Activated naive CD4-positive, alpha-beta T cell treated with anti-CD3 and anti-CD28 coated beads, Interleukin-2, amount 10 ng/mL, durations not matched to agents 7 days and 5 days (primary cell): ENCODE measurements at regions of chr2 and their contacts with region 1.

Region 1: DNA sequence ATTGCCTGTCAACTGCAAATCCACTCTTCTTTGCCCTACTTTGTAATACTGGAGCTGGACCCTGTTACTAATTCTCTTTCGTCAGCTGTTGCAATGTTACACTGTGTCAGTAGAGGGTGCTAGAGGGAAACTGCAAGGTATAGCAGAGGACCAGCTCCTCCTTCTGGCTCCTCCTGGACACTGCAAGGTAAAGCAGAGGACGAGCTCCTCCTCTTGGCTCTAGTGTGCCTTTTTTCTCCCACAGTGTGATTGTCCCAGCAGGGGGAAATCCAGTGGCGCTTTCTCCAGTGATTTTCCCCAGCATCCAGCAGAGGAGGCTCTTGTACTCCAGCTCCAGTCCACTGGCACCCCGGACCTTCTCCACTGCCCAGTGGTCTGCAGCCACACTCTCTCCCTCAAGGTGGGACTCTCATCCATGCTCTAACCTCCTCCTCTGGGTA is 95.6 kb downstream of the CAPN13 start:
- DNase-seq: peak; percentile 93
- H3K4me3 Mint-ChIP-seq: no peak overlapping the region
- H3K27ac Mint-ChIP-seq: no peak overlapping the region
- H3K4me1 Mint-ChIP-seq: peaks cover 4% of the 10 kb centered on the region
- H3K27me3 Mint-ChIP-seq: peaks cover 5% of the 10 kb centered on the region

Region 2: GRCh38 chr2:30089171-30089570 is 622.5 kb before region 1 on chr2:
- CTCF ChIA-PET with region 1: interaction called, 12 read pairs
- DNase-seq: no peak
- H3K4me3 Mint-ChIP-seq: no peak overlapping the region
- H3K27ac Mint-ChIP-seq: no peak overlapping the region
- H3K4me1 Mint-ChIP-seq: no peaks in the 10 kb centered on the region
- H3K27me3 Mint-ChIP-seq: peaks cover 24% of the 10 kb centered on the region

Region 3: DNA sequence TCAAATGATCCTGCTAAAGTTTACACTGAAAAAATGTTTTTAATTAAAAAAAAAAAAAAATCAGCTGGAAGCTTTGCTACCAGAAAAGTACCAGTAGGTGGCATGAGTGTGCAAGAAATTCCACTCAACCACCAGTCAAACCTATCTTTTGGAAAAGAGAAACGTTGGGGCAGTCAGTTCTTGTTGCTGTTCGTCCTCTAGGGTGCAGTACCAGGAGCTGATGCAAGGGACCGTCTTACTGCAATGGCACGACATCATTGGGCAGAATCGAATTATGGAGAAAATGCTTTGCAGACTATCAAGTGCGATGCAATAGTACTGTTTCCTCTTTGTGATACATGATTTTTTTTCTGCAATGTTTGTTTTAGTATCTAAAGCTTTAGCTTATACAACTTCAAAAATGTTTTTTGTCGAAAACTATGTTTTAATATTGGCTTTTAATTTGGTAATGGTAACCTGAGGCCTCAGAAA is 546.6 kb before region 1 on chr2:
- CTCF ChIA-PET with region 1: interaction called, 535 read pairs
- DNase-seq: peak; percentile 81
- H3K4me3 Mint-ChIP-seq: no peak overlapping the region
- H3K27ac Mint-ChIP-seq: no peak overlapping the region
- H3K4me1 Mint-ChIP-seq: no peaks in the 10 kb centered on the region
- H3K27me3 Mint-ChIP-seq: peaks cover 4% of the 10 kb centered on the region

Region 4: GRCh38 chr2:30225131-30225762 is 486.4 kb before region 1 on chr2:
- CTCF ChIA-PET with region 1: interaction called, 16 read pairs
- DNase-seq: peak; percentile 71
- H3K4me3 Mint-ChIP-seq: peak overlapping the region; percentile 80
- H3K27ac Mint-ChIP-seq: peak overlapping the region; percentile 94
- H3K4me1 Mint-ChIP-seq: peaks cover 66% of the 10 kb centered on the region
- H3K27me3 Mint-ChIP-seq: peaks cover 14% of the 10 kb centered on the region

Region 5: DNA sequence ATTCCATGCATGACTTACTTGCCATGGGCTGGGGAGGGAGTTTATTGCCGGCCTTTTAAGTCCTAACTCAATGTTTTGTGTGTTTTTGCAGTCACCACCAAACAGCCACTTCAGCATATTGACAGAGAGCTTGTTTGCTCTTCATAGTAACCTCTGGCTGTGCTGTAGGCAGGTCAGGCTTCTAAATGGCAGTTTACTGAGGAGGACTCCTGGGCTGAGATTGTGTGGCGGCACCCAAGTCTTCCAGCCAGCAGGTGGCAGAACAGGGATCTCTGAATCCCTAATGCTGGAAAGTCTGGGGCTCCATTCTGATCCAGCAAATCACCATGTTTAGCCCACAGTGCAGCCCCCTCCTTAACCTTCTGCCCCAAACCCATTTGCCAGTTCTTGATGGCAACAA is 25.7 kb before region 1 on chr2:
- CTCF ChIA-PET with region 1: interaction called, 14 read pairs
- DNase-seq: peak; percentile 20
- H3K4me3 Mint-ChIP-seq: no peak overlapping the region
- H3K27ac Mint-ChIP-seq: no peak overlapping the region
- H3K4me1 Mint-ChIP-seq: no peaks in the 10 kb centered on the region
- H3K27me3 Mint-ChIP-seq: peaks cover 9% of the 10 kb centered on the region

Region 6: DNA sequence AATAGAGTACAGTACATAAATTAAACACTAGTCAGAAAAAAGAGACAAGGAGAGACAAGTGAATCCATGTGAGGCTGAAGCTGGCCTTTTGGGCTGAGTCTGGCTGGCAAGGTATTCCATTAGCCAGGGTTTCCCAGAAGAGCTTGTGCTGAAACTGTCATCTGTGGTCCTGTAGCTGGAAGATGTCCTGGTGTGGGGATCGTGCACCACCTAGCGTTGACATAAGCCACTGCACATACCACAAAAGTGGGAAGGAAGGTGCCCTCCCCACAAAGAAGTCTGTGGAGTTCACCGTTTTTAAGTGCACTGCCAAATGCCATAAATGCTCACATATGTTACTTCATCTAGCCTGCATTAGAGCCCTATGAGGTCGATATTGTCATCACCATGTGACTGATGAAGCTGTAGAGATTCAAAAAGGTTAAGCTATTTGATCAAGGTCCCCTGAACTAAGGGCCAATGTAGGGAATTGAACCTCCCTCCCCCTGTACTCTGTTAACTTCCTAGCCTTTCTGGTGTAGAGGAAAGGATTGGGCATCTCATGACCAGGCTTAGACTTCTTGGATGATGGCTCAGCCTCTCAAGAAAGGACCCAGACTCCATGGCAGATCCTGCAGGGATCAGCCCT is 458.5 kb after region 1 on chr2:
- CTCF ChIA-PET with region 1: interaction called, 103 read pairs
- DNase-seq: peak; percentile 63
- H3K4me3 Mint-ChIP-seq: no peak overlapping the region
- H3K27ac Mint-ChIP-seq: no peak overlapping the region
- H3K4me1 Mint-ChIP-seq: no peaks in the 10 kb centered on the region
- H3K27me3 Mint-ChIP-seq: peaks cover 14% of the 10 kb centered on the region